GM12878 (cell line): ENCODE measurements at regions of chr6 and their contacts with region 1.

Region 1: DNA sequence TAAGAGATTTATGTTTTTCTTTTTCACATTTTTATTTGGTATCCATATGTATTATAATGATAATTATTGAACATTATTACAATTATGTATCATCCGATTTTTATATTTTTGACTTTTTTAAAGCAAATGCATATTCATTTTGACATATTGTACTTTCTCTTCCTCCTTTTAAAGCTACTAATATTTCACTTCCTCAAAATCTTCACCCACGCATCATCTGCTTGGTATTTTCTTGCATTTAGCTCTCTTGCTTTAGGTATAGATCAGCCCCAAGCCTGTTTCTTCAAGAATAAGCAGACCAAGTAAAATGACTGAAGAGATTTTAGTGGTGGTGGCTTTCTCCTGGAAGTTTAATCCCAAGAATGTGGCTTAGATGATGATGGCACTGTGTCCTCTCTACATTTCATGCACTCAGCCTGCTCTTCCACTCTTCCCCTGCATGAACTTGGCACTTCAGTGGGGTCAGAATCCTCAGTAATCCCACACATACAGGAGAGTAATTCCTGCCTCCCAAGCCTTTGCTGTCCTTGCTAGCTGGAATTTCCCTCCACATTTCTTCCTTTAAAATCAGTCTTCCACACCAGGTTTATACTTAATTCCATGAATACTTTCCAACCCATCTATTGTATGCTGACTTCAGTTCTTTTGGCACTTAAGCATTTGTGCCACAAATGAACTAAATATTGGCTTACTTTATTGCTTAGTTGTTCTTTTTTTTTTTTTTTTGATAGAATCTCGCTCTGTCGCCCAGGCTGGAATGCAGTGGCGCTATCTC is 8.2 kb downstream of the NCOA7 start:
- DNase-seq: peak; percentile 72
- ATAC-seq: peak; percentile 81
- H3K4me3 ChIP-seq: no peak overlapping the region
- H3K27ac ChIP-seq: peak overlapping the region; percentile 96
- H3K4me1 ChIP-seq: peaks cover 51% of the 10 kb centered on the region
- H3K27me3 ChIP-seq: no peaks in the 10 kb centered on the region
- CTCF ChIP-seq: no peak
- EP300 ChIP-seq: peak; percentile 83 to 99
- POLR2A ChIP-seq: no peak
- RAD21 ChIP-seq: no peak

Region 2: GRCh38 chr6:125812394-125813292 is 13.7 kb after region 1 on chr6:
- CTCF ChIA-PET with region 1: interaction called, 197 read pairs
- POLR2A ChIA-PET with region 1: interaction called, 36 read pairs
- RAD21 ChIA-PET with region 1: interaction called, 185 read pairs
- SMC1A ChIA-PET with region 1: interaction called, 325 read pairs
- in situ Hi-C with region 1: no loop called
- intact Hi-C with region 1: no loop called
- DNase-seq: no peak
- ATAC-seq: no peak
- H3K4me3 ChIP-seq: no peak overlapping the region
- H3K27ac ChIP-seq: no peak overlapping the region
- H3K4me1 ChIP-seq: peaks cover 68% of the 10 kb centered on the region
- H3K27me3 ChIP-seq: no peaks in the 10 kb centered on the region
- CTCF ChIP-seq: no peak
- EP300 ChIP-seq: no peak
- POLR2A ChIP-seq: no peak
- RAD21 ChIP-seq: no peak

Region 3: DNA sequence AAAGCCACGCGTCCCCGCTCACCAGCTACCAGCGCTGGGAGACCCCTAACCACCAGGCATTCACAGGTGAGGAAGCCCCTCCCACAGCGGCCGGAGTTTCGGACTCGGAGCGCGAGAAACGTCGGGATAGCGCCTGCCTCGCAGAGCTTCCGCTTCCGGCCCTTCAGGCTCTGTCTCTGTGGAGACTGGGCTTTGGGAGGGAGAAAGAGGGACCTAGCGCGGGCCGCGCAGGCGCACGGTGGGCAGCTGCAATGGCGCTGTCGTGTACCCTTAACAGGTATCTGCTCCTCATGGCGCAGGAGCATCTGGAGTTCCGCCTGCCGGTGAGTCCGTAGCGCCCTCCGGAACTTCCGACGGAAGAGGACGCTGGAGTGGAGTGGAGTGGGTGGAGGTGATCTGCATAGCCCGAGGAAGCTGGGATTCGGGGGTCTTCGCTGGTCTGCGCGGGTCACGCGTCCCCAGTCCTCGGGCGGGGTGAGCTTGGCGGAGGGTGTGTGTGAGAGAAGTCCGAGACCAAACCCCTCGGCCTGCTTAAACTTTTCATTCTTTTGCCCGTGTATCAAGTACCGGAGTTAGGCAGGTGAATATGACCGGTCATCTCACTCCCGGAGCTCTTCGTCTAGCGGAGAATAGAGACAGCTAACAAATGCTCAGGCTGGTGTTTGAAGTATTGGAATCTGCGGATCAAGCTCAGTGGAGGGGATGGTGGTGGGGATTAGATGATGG is 187.5 kb after region 1 on chr6 and contains the start of gene TRMT11:
- CTCF ChIA-PET with region 1: interaction called, 5 read pairs
- POLR2A ChIA-PET with region 1: interaction called, 3 read pairs
- RAD21 ChIA-PET with region 1: interaction called, 4 read pairs
- SMC1A ChIA-PET with region 1: interaction called, 3 read pairs
- in situ Hi-C with region 1: no loop called
- intact Hi-C with region 1: loop called (anchors 5 kb)
- DNase-seq: peak; percentile 69
- ATAC-seq: peak; percentile 94
- H3K4me3 ChIP-seq: peak within 1 kb of the TSS; percentile 85
- H3K27ac ChIP-seq: peak within 1 kb of the TSS; percentile 95
- H3K4me1 ChIP-seq: peaks cover 5% of the 10 kb centered on the region; the same call in 1 of the 2 replicates
- H3K27me3 ChIP-seq: no peaks in the 10 kb centered on the region
- CTCF ChIP-seq: no peak
- EP300 ChIP-seq: 0 out of 4 replicates have a peak, but pooled peaks of 1 of the 2 experiments have one; percentile 34
- POLR2A ChIP-seq: peak; percentile 96
- RAD21 ChIP-seq: no peak
- polyA plus RNA-seq, gene TRMT11: 56.8 to 72.4 TPM